Sciatic nerve (tissue), 2 donors: ENCODE measurements at regions of chr7 and their contacts with region 1.

Region 1: DNA sequence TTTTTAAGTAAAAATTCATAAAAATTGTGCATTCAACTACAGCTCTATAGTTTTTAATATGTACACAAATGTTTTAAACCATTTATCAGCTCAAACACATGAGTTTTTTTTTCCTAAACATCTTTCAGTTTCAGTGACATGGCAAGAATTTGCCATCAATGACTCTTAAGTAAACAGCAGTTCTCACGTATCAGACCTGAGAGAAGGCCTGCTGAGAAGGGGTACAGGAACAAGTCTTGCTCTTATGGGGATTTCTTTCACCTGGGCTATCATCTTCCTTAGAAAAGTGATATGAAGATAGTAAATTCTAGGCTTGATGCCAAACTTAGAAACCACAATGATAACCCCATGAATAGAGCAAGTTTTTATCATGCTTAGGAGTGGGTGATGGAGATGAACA is 467.8 kb downstream of the ARL4A start:
- DNase-seq: no peak
- ATAC-seq: no peak

Region 2: DNA sequence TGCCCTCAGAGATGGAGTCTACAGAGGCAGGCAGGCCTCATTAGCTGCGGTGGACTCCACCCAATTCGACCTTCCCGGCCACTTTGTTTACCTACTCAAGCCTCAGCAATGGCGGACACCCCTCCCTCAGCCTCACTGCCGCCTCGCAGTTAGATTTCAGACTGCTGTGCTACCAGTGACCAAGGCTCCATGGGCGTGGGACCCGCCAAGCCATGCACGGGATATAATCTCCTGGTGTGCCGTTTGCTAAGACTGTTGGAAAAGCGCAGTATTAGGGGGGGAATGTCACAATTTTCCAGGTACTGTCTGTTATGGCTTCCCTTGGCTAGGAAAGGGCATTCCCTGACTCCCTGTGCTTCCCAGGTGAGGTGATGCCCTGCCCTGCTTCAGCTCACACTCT is 215.5 kb before region 1 on chr7:
- intact Hi-C with region 1: no loop called
- DNase-seq: no peak
- ATAC-seq: no peak

Region 3: DNA sequence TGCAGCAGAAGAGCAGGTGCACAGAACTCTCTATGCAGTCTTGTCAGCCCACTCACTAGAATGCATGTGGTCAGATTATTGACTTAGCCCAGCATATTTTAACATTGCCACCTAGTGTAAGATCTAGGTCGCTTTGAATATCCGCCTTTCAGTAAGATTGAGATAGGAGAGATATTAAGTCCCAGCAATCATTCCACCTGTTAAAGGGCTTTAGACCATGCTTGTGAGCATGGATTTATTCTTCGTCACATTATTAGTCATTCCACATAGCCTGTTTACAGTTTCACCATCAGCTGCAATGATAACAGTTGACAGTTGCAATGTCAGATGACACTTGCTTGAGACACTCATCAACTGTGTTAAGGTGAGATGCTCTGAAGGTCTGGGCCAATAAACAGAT is 23.9 kb after region 1 on chr7:
- intact Hi-C with region 1: loop called (anchors 2 kb)
- DNase-seq: no peak
- ATAC-seq: no peak